ENCODE measurements at regions of chr11 and their contacts with region 1.

Region 1: DNA sequence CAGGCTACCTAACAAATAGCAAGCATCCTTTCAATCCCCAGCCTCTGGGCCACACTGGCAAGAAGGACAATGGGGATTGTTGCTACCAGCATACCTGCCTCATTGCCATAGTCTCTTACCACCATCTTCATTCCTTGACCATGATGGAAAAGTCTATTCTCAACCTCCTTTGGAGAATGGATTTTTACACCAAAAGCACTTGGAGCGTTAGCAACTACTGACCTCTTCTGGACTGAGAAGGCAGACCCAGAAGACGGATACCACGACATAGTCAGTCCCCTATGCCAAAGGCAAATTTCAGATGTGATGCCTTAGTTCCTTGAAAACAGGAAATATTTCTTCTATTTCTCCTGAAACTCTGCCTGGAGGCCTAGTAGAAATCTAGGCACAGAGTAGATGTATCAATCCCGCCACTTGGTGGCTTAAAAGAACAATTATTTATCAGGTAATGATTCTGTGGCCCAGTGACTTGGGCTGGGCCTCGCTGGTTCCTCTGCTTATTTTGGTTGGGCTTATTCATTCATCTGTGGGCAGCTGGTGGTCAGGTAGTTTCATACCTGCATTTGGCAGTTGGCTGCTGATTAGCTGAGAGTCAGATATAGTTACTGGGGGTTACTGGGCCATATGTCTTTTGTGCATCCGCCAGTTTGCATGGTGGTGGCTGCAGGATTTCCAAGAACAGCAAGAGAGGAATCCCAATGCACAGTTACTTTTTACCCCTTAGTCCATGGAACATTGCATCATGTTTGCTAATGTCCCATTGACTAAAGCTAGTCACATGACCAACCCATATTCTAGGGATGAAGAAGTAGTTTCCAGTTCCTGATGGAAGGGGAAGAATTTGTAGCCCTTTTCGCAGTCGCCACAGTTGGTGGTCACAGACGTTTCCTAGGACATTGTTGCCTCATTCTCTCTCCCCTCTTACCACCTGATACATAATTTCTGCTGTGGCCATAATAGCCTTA is 75.2 kb downstream of the DHCR7 start:
- DNase-seq: peak; percentile 26
- ATAC-seq: peak; percentile 66
- H3K4me3 ChIP-seq: no peak overlapping the region
- H3K27ac ChIP-seq: no peak overlapping the region
- H3K4me1 ChIP-seq: no peaks in the 10 kb centered on the region
- H3K27me3 ChIP-seq: peaks cover 11 to 33% of the 10 kb centered on the region in 2 experiments; a peak in 4 of 5 replicates
- CTCF ChIP-seq: peak; percentile 71
- EP300 ChIP-seq: no peak
- POLR2A ChIP-seq: no peak
- RAD21 ChIP-seq: 0 out of 2 replicates have a peak, but pooled peaks have one; percentile 12

Region 2: GRCh38 chr11:70818351-70818750 is 554.6 kb before region 1 on chr11:
- CTCF ChIA-PET with region 1: no interaction called
- POLR2A ChIA-PET with region 1: no interaction called
- in situ Hi-C with region 1: no loop called
- intact Hi-C with region 1: loop called (anchors 5 kb)
- DNase-seq: no peak
- ATAC-seq: no peak
- H3K4me3 ChIP-seq: no peak overlapping the region
- H3K27ac ChIP-seq: no peak overlapping the region
- H3K4me1 ChIP-seq: no peaks in the 10 kb centered on the region
- H3K27me3 ChIP-seq: no peaks in the 10 kb centered on the region
- CTCF ChIP-seq: no peak
- EP300 ChIP-seq: no peak
- POLR2A ChIP-seq: no peak
- RAD21 ChIP-seq: no peak

Region 3: DNA sequence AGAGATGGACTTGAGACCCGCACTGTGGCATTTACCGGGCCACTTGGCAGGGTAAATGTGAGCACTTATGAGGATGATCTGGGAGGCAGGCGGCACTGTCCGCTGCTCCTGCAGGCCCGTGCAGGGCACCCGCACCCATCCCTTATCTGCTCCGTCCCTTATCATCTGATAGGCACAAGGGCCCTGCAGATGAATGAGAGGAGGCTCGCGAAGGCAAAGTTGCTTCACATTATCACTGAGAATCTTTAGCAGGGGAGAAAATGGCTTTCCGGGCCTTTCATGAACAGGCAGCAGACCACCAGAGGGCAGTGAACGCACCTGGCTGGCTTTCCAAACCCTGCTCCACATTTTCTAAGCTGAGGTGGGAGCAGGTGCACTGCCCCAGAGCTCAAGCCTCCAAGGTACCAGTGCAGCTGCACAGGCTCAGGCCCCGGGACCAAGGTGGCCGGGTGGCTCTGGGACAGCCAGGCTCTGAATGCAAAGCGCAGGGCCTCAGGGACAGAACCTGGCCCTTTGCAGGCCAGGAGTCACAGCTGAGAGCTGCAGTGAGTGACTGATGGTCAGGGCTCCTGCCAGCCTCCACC is 286.2 kb before region 1 on chr11:
- CTCF ChIA-PET with region 1: interaction called, 3 read pairs
- POLR2A ChIA-PET with region 1: no interaction called
- in situ Hi-C with region 1: no loop called
- intact Hi-C with region 1: loop called (anchors 2 kb)
- DNase-seq: peak; percentile 34
- ATAC-seq: peak; percentile 76
- H3K4me3 ChIP-seq: no peak overlapping the region
- H3K27ac ChIP-seq: no peak overlapping the region
- H3K4me1 ChIP-seq: no peaks in the 10 kb centered on the region
- H3K27me3 ChIP-seq: no peaks in the 10 kb centered on the region
- CTCF ChIP-seq: peak; percentile 76
- EP300 ChIP-seq: no peak
- POLR2A ChIP-seq: no peak
- RAD21 ChIP-seq: peak; percentile 27; the same call in 1 of the 2 replicates

Region 4: GRCh38 chr11:71266221-71266833 is 106.6 kb before region 1 on chr11:
- CTCF ChIA-PET with region 1: no interaction called
- POLR2A ChIA-PET with region 1: no interaction called
- in situ Hi-C with region 1: no loop called
- intact Hi-C with region 1: no loop called
- DNase-seq: no peak
- ATAC-seq: peak; percentile 34
- H3K4me3 ChIP-seq: peak overlapping the region in 1 of 3 experiments; percentile 50; a peak in 2 of 6 replicates
- H3K27ac ChIP-seq: peak overlapping the region; percentile 20
- H3K4me1 ChIP-seq: peaks cover 71% of the 10 kb centered on the region
- H3K27me3 ChIP-seq: 0 out of 5 replicates have a peak, but pooled peaks cover 0 to 6% of the 10 kb centered on the region in 2 experiments
- CTCF ChIP-seq: peak; percentile 39
- EP300 ChIP-seq: no peak
- POLR2A ChIP-seq: no peak
- RAD21 ChIP-seq: no peak

Region 5: DNA sequence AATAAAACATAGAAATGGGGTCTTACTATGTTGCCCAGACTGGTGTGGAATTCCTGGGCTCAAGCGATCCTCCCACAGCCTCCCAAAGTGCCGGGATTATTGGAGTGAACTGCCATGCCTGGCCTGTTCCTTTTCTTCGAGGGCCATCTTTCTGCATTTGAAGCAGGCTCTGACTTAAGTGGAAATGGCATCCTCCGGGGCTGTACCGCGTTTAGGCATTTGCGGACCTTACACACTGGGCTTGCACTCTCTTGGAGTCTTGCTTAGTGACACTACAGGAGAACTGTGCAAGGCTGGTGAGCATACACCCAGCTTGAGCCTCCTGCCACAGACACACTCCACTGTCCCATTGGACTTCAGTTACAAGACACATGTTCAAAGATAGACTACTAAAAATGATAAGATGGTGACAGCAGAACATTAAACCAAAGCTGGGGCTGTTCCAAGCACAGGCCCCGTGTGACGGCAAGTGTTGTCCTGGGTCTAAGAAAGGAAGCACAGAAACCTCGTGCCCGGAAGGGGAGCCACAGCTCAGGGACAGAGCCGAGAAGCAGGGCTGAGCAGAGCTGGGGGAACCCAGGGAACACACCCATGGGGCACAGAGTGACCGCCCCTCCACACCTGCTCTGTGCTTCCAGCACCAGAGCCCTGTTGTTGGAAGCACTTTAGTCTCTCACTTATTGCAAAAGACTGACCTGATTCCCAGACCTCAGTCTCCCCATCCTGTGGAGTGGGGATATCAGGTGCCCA is 61.6 kb before region 1 on chr11:
- CTCF ChIA-PET with region 1: no interaction called
- POLR2A ChIA-PET with region 1: no interaction called
- in situ Hi-C with region 1: no loop called
- intact Hi-C with region 1: no loop called
- DNase-seq: no peak
- ATAC-seq: peak; percentile 22; the same call in 1 of the 3 replicates
- H3K4me3 ChIP-seq: no peak overlapping the region; a peak in 1 of 6 replicates
- H3K27ac ChIP-seq: no peak overlapping the region
- H3K4me1 ChIP-seq: peaks cover 40% of the 10 kb centered on the region
- H3K27me3 ChIP-seq: peaks cover 1 to 14% of the 10 kb centered on the region in 2 experiments; a peak in 2 of 5 replicates
- CTCF ChIP-seq: no peak
- EP300 ChIP-seq: no peak
- POLR2A ChIP-seq: no peak
- RAD21 ChIP-seq: no peak

Region 6: DNA sequence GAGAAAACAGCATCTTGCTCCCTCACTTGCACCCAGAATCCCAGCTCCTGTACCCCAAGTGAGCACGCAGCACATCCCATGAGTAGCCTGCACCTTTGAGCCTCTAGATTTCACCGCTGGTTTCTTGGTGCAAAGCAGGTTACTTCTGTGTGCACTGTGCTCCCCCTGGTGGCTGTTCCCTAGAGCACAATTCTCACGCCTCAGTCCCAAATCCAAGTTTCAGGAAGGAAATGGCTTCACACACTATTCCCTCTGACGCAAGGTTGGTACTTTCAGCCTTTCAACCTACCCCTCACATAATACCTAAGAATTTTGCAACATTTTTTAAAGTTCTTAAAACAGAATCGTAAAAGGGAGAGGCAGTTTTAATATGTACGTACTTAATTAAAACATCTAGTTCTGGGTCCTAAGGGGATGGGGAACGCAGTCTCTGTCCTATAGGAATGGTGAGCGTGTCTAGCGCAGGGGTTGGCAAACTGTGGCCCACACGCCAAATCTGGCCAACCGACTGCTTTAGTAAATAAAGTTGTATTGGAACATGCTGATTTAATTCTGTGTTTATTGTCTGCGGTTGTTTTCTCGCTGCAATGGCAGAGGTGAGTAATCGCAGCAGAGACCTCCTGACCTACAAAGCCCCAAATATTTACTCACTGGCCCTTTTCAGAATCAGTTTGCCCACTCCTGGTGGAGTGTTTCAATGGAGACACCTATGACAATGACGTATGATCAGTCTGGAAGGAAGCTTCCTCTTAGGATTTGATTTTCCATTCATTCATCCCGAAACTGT is 47.7 kb after region 1 on chr11:
- CTCF ChIA-PET with region 1: no interaction called
- POLR2A ChIA-PET with region 1: no interaction called
- in situ Hi-C with region 1: no loop called
- intact Hi-C with region 1: no loop called
- DNase-seq: peak; percentile 48
- ATAC-seq: peak; percentile 81
- H3K4me3 ChIP-seq: no peak overlapping the region
- H3K27ac ChIP-seq: no peak overlapping the region
- H3K4me1 ChIP-seq: peaks cover 9% of the 10 kb centered on the region; the same call in 1 of the 2 replicates
- H3K27me3 ChIP-seq: peaks cover 3 to 28% of the 10 kb centered on the region in 2 experiments; a peak in 3 of 5 replicates
- CTCF ChIP-seq: peak; percentile 88
- EP300 ChIP-seq: no peak
- POLR2A ChIP-seq: no peak
- RAD21 ChIP-seq: peak; percentile 70